AG04450 (cell line): ENCODE measurements at regions of chr20 and their contacts with region 1.

Region 1: GRCh38 chr20:17431621-17432364 is 99.4 kb downstream of the BFSP1 start:
- DNase-seq: peak; percentile 20
- H3K4me3 ChIP-seq: no peak overlapping the region
- H3K27ac ChIP-seq: no peak overlapping the region
- H3K27me3 ChIP-seq: no peaks in the 10 kb centered on the region
- CTCF ChIP-seq: peak; percentile 87

Region 2: DNA sequence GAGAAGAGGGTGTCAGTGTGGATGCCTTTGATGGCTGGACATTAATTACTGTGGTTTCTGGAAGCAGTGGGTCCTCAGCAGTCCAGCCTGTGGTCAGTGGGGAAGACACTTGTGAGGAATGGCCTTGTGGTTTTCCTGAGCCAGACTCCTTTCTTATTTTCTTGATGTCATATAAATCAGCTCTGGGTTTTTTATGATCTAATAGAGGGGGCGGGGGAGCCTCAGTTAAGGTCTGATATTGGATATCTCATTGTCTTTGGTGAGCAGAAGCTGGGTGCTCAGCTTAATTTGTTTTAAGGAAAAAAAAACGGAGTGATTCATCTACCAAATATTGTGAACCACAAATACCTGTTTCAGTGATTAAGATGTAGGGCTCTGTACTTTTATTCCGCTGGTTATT is 621.6 kb before region 1 on chr20:
- CTCF ChIA-PET with region 1: interaction called, 443 read pairs
- POLR2A ChIA-PET with region 1: no interaction called
- DNase-seq: no peak
- H3K4me3 ChIP-seq: no peak overlapping the region
- H3K27ac ChIP-seq: no peak overlapping the region
- H3K27me3 ChIP-seq: no peaks in the 10 kb centered on the region
- CTCF ChIP-seq: no peak

Region 3: DNA sequence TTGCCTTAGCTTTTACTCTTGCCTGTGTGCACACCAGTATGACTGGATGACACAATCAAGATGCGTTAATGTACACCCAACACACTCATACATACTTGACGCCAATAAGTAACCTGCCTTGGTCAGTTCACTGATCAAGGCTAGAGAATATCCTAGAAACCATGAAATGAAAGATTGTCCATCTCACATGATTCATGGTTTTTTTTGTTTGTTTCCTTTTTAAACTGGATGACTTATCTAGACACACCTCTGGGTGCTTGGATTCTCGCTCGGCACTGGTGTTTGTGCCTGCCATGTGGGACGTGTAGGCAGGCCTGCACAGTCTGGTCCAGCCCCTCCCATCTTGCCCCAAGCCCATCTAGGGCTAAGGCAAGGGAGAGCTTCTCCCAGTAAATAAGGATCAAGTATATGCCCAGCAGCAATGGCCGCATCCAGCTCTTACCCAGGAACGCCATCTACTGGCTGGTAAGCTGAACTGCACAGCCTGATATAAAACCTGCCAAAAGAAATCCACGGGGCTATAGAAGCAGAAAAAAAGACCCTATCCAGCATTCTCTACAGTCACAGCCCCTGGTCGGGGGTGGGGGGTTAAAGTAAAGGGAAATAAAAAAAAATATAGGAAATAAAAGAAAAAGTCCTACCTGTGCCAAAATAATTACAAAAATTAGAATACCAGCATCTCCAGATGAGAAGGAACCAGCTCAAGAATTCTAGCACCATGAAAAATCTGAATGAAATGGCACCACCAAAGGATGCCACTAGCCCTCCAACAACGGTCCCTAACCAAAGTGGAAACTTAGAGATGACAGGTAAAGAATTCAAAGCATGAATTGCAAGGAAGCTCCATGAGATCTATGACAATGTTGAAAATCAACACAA is 610.3 kb before region 1 on chr20:
- CTCF ChIA-PET with region 1: interaction called, 21 read pairs
- POLR2A ChIA-PET with region 1: no interaction called
- DNase-seq: no peak
- H3K4me3 ChIP-seq: no peak overlapping the region
- H3K27ac ChIP-seq: no peak overlapping the region
- H3K27me3 ChIP-seq: peaks cover 3% of the 10 kb centered on the region
- CTCF ChIP-seq: peak; percentile 94

Region 4: DNA sequence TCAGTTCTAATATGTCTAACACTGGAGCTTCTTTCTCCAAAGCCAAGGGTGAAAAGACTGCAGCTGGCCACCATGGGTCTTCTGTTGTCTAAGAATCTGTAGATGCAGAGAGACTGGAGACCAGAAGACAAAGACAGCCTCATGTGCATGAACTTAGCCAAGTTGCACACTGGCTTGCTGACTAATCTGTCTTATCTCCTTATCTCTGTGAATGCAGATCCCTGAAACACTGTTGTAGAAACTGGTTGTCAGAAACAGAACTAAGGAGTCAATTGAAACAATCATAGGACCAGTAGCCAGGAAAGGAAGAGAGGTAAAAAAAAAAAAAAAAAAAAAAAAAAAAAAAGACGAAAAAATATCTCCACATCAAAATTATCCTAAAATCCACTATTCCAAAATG is 10.3 kb before region 1 on chr20:
- CTCF ChIA-PET with region 1: interaction called, 32 read pairs
- POLR2A ChIA-PET with region 1: no interaction called
- DNase-seq: no peak
- H3K4me3 ChIP-seq: no peak overlapping the region
- H3K27ac ChIP-seq: no peak overlapping the region
- H3K27me3 ChIP-seq: no peaks in the 10 kb centered on the region
- CTCF ChIP-seq: no peak